ENCODE measurements at regions of chr20 and their contacts with region 1.

Region 1: GRCh38 chr20:56468316-56469082 is at the start of gene RTF2:
- DNase-seq: peak; percentile 86
- ATAC-seq: peak; percentile 98
- H3K4me3 ChIP-seq: peak within 1 kb of the TSS; percentile 90
- H3K27ac ChIP-seq: peak within 1 kb of the TSS; percentile 85
- H3K4me1 ChIP-seq: peaks cover 14% of the 10 kb centered on the region
- H3K27me3 ChIP-seq: no peaks in the 10 kb centered on the region
- CTCF ChIP-seq: no peak
- EP300 ChIP-seq: peak; percentile 12 to 65; a peak in 1 of 4 replicates
- POLR2A ChIP-seq: peak; percentile 93
- RAD21 ChIP-seq: no peak
- polyA plus RNA-seq, gene RTF2: 99.3 to 133 TPM

Region 2: DNA sequence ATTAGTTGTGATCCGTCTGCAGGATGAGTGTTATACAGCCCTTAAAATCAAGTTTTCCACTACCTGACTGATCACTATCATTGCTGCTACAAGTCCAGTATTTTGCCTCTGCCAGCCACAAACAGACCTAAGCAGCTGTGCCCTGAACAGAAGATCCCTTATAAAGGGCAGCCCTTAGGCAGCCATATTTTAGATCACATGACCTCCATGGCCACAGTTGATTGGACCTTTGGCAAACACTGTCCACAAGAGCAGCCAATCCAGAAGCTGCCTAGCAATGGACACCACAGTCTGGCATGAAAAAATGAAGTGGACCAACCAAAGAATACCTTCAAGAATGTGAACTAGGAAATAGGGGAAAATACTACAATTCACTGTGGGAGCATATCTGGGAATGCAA is 169.1 kb before region 1 on chr20:
- CTCF ChIA-PET with region 1: no interaction called
- POLR2A ChIA-PET with region 1: no interaction called
- RAD21 ChIA-PET with region 1: no interaction called
- SMC1A ChIA-PET with region 1: no interaction called
- in situ Hi-C with region 1: no loop called
- intact Hi-C with region 1: no loop called
- DNase-seq: no peak
- ATAC-seq: no peak
- H3K4me3 ChIP-seq: no peak overlapping the region
- H3K27ac ChIP-seq: no peak overlapping the region
- H3K4me1 ChIP-seq: no peaks in the 10 kb centered on the region
- H3K27me3 ChIP-seq: no peaks in the 10 kb centered on the region
- CTCF ChIP-seq: no peak
- EP300 ChIP-seq: no peak
- POLR2A ChIP-seq: no peak
- RAD21 ChIP-seq: no peak

Region 3: GRCh38 chr20:56439771-56440291 is 28.7 kb before region 1 on chr20:
- CTCF ChIA-PET with region 1: interaction called, 3 read pairs
- POLR2A ChIA-PET with region 1: no interaction called
- RAD21 ChIA-PET with region 1: no interaction called
- SMC1A ChIA-PET with region 1: interaction called, 8 read pairs
- in situ Hi-C with region 1: no loop called
- intact Hi-C with region 1: loop called (anchors 1 kb)
- DNase-seq: no peak
- ATAC-seq: peak; percentile 14; the same call in 2 of the 3 replicates
- H3K4me3 ChIP-seq: no peak overlapping the region
- H3K27ac ChIP-seq: no peak overlapping the region
- H3K4me1 ChIP-seq: peaks cover 20% of the 10 kb centered on the region
- H3K27me3 ChIP-seq: no peaks in the 10 kb centered on the region
- CTCF ChIP-seq: no peak
- EP300 ChIP-seq: no peak
- POLR2A ChIP-seq: no peak
- RAD21 ChIP-seq: no peak

Measured in GM12878 (cell line).